ENCODE measurements at regions of chr3 and their contacts with region 1.

Region 1: GRCh38 chr3:53295410-53295809 is 39.6 kb upstream of the TKT start:
- DNase-seq: no peak
- ATAC-seq: no peak
- H3K4me3 Mint-ChIP-seq: no peak overlapping the region
- H3K27ac Mint-ChIP-seq: no peak overlapping the region
- H3K4me1 Mint-ChIP-seq: no peaks in the 10 kb centered on the region
- H3K27me3 Mint-ChIP-seq: no peaks in the 10 kb centered on the region
- CTCF ChIP-seq: no peak

Region 2: GRCh38 chr3:53231572-53232511 is 63.6 kb before region 1 on chr3:
- CTCF ChIA-PET with region 1: no interaction called
- POLR2A ChIA-PET with region 1: no interaction called
- intact Hi-C with region 1: no loop called
- DNase-seq: no peak
- ATAC-seq: no peak
- H3K4me3 Mint-ChIP-seq: no peak overlapping the region
- H3K27ac Mint-ChIP-seq: no peak overlapping the region
- H3K4me1 Mint-ChIP-seq: peaks cover 5% of the 10 kb centered on the region
- H3K27me3 Mint-ChIP-seq: no peaks in the 10 kb centered on the region
- CTCF ChIP-seq: no peak

Region 3: GRCh38 chr3:53493963-53494791 is 198.8 kb after region 1 on chr3 and contains the start of gene CACNA1D:
- CTCF ChIA-PET with region 1: no interaction called
- POLR2A ChIA-PET with region 1: no interaction called
- intact Hi-C with region 1: loop called (anchors 5 kb)
- DNase-seq: peak; percentile 14
- ATAC-seq: peak; percentile 66
- H3K4me3 Mint-ChIP-seq: peak within 1 kb of the TSS; percentile 51
- H3K27ac Mint-ChIP-seq: no peak within 1 kb of the TSS
- H3K4me1 Mint-ChIP-seq: peaks cover 11% of the 10 kb centered on the region
- H3K27me3 Mint-ChIP-seq: peaks cover 62% of the 10 kb centered on the region
- CTCF ChIP-seq: no peak
- total RNA-seq, gene CACNA1D: not detected

Measured in activated CD8-positive, alpha-beta T cell treated with anti-CD3 and anti-CD28 coated beads for 36 hours (primary cell).